ENCODE measurements at regions of chr2 and their contacts with region 1.

Region 1: GRCh38 chr2:27428213-27428977 is at the start of gene NRBP1:
- DNase-seq: peak; percentile 80 to 83 (median 80)
- H3K4me3 ChIP-seq: peak within 1 kb of the TSS; percentile 64 to 98 (median 73)
- H3K4me3 Mint-ChIP-seq: peak within 1 kb of the TSS; percentile 96
- H3K27ac ChIP-seq: peak within 1 kb of the TSS; percentile 81 to 89
- H3K27ac Mint-ChIP-seq: peak within 1 kb of the TSS; percentile 90 to 97 (median 93)
- H3K4me1 ChIP-seq: peaks cover 19 to 28% of the 10 kb centered on the region in 2 donors
- H3K4me1 Mint-ChIP-seq: peaks cover 29% of the 10 kb centered on the region
- H3K27me3 ChIP-seq: no peaks in the 10 kb centered on the region
- H3K27me3 Mint-ChIP-seq: no peaks in the 10 kb centered on the region
- CTCF ChIP-seq: no peak
- polyA plus RNA-seq, gene NRBP1: 95.6 to 108 (median 102) TPM

Region 2: GRCh38 chr2:27409321-27410073 is 18.9 kb before region 1 on chr2 and contains the start of gene PPM1G:
- intact Hi-C with region 1: loop called in 1 of 2 experiments (anchors 1 kb)
- DNase-seq: peak; percentile 92 to 94 (median 93)
- H3K4me3 ChIP-seq: peak within 1 kb of the TSS; percentile 91 to 96 (median 96)
- H3K4me3 Mint-ChIP-seq: peak within 1 kb of the TSS; percentile 88 to 92
- H3K27ac ChIP-seq: peak within 1 kb of the TSS; percentile 74 to 85
- H3K27ac Mint-ChIP-seq: peak within 1 kb of the TSS; percentile 81 to 94 (median 89)
- H3K4me1 ChIP-seq: peaks cover 21% of the 10 kb centered on the region in 2 donors
- H3K4me1 Mint-ChIP-seq: peaks cover 29% of the 10 kb centered on the region
- H3K27me3 ChIP-seq: no peaks in the 10 kb centered on the region
- H3K27me3 Mint-ChIP-seq: peaks cover 2 to 9% (median 3%) of the 10 kb centered on the region in 3 donors
- CTCF ChIP-seq: no peak
- polyA plus RNA-seq, gene PPM1G: 31.9 to 54.3 (median 47.3) TPM

Region 3: DNA sequence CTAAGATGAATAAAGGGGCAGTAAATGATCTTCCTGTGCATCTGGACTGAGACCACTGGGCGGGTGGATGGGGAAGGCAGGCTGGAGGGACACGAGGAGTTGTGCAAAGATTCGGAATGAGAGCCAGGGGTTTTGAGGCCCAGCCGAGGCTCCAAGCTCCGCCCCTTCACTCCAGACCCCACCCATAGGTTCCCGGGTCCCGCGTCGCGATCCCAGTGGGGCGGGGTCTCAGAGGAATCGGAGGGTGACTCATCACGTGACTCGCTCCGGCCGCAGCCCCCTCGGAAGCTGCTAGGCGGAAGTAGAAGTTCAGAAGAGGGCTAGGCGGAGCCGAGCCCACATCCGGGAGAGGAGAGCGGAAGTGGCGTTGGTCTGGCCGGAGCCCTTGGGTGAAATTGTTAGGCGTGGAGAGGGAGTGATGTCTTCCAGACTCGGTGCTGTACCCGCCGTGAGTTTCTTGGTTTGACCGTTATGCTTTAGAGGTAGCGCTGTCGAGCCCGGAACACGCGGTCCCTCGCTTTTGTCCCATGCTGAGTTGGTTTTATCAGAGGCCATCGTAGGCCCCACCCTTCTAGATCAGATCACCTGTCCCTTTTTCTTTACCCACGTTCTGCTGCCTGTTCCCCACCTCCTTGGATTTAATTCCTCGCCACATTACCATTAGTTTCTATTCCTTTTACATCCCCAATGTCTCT is 154.4 kb after region 1 on chr2 and contains the start of gene ZNF512:
- intact Hi-C with region 1: loop called (anchors 10 kb)
- DNase-seq: peak; percentile 94 to 96 (median 95)
- H3K4me3 ChIP-seq: peak within 1 kb of the TSS; percentile 66 to 98 (median 87)
- H3K4me3 Mint-ChIP-seq: peak within 1 kb of the TSS; percentile 91 to 95
- H3K27ac ChIP-seq: peak within 1 kb of the TSS; percentile 72 to 91
- H3K27ac Mint-ChIP-seq: peak within 1 kb of the TSS; percentile 90 to 99 (median 96)
- H3K4me1 ChIP-seq: peaks cover 24 to 25% of the 10 kb centered on the region in 2 donors
- H3K4me1 Mint-ChIP-seq: peaks cover 34% of the 10 kb centered on the region
- H3K27me3 ChIP-seq: no peaks in the 10 kb centered on the region
- H3K27me3 Mint-ChIP-seq: peaks cover 0 to 2% (median 2%) of the 10 kb centered on the region in 3 donors
- CTCF ChIP-seq: no peak
- polyA plus RNA-seq, gene ZNF512: 6.7 to 13.1 (median 12.8) TPM

Measured in CD14-positive monocyte (primary cell).